ENCODE measurements at regions of chr5 and their contacts with region 1.

Region 1: DNA sequence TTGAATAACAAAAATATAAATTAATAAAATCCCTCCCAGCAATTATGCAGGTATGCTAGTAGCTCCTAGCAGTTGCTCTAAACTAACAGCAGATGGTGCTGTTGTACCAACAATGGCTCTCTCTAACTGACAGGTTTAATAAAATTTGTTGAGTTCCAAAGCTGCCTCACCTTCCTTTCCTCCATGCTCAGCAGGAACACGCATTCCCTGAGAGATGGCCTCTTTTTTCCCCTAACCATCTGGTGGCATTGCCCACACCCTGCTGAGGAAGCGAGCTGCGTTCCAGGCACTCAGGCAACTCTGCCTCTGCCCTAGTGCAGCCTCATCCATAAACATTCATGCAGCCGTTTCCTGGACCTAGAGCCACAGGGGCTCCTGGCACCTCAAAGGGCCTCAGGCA is 106.2 kb downstream of the KLHL3 start:
- DNase-seq: peak; percentile 8
- ATAC-seq: peak; percentile 92
- H3K4me3 ChIP-seq: no peak overlapping the region
- H3K27ac ChIP-seq: no peak overlapping the region
- H3K4me1 ChIP-seq: no peaks in the 10 kb centered on the region
- H3K27me3 ChIP-seq: no peaks in the 10 kb centered on the region
- CTCF ChIP-seq: peak; percentile 75 to 89 (median 86)
- EP300 ChIP-seq: no peak
- POLR2A ChIP-seq: no peak
- RAD21 ChIP-seq: peak; percentile 90

Region 2: GRCh38 chr5:137641148-137641547 is 11.5 kb after region 1 on chr5:
- CTCF ChIA-PET with region 1: interaction called, 23 read pairs
- POLR2A ChIA-PET with region 1: no interaction called
- RAD21 ChIA-PET with region 1: interaction called, 6 read pairs
- SMC1A ChIA-PET with region 1: interaction called, 19 read pairs
- in situ Hi-C with region 1: no loop called
- intact Hi-C with region 1: no loop called
- DNase-seq: no peak
- ATAC-seq: no peak
- H3K4me3 ChIP-seq: no peak overlapping the region
- H3K27ac ChIP-seq: no peak overlapping the region
- H3K4me1 ChIP-seq: no peaks in the 10 kb centered on the region
- H3K27me3 ChIP-seq: no peaks in the 10 kb centered on the region
- CTCF ChIP-seq: no peak
- EP300 ChIP-seq: no peak
- POLR2A ChIP-seq: no peak
- RAD21 ChIP-seq: no peak

Region 3: DNA sequence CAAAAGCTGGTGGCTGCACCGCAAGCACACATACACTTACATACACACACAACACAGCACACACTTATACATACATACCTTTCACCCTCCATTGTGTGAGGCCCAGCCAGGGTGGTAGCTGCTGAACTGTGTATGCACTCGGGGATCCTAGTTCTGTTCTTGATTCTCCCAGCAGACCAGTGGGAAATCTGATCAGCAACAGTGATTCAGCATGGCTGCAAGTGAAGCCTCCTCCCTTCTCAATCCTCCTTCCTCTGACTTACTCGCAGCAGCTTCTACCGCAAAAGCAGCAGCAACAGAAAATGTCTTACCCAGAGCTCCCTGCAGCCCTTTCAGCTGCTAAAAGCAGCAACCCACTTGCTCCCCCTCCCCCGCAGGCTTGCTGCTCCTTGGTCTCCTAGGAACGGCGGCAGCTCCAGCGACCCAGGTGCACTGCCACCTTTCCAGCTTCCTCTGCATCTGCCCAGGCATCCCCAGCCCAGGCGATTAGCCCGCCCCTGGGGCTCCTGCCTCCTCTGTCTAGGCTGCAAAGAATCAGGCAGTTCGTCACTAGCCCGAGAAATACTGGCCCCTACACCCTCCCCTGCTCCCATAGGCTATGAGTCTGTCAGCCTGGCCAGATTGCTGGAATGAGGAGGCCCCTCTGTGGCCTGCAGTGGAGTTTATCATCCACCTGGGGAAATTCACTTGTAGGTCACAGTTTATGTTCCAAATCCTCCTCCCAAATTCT is 106.1 kb after region 1 on chr5 and contains the start of gene KLHL3:
- CTCF ChIA-PET with region 1: interaction called, 195 read pairs
- POLR2A ChIA-PET with region 1: no interaction called
- RAD21 ChIA-PET with region 1: interaction called, 101 read pairs
- SMC1A ChIA-PET with region 1: interaction called, 106 read pairs
- in situ Hi-C with region 1: loop called (anchors 5 kb)
- intact Hi-C with region 1: no loop called
- DNase-seq: no peak
- ATAC-seq: peak; percentile 74
- H3K4me3 ChIP-seq: peak within 1 kb of the TSS; percentile 61
- H3K27ac ChIP-seq: peak within 1 kb of the TSS; percentile 86
- H3K4me1 ChIP-seq: peaks cover 15% of the 10 kb centered on the region
- H3K27me3 ChIP-seq: no peaks in the 10 kb centered on the region
- CTCF ChIP-seq: peak; percentile 7 to 44 (median 17); a peak in 3 of 6 replicates
- EP300 ChIP-seq: no peak
- POLR2A ChIP-seq: peak; percentile 52
- RAD21 ChIP-seq: peak; percentile 69
- polyA plus RNA-seq, gene KLHL3: 1.7 to 2.3 TPM

Region 4: GRCh38 chr5:137754126-137754960 is 124.7 kb after region 1 on chr5 and contains the start of gene HNRNPA0:
- CTCF ChIA-PET with region 1: interaction called, 14 read pairs
- POLR2A ChIA-PET with region 1: no interaction called
- RAD21 ChIA-PET with region 1: no interaction called
- SMC1A ChIA-PET with region 1: interaction called, 4 read pairs
- in situ Hi-C with region 1: no loop called
- intact Hi-C with region 1: no loop called
- DNase-seq: peak; percentile 88
- ATAC-seq: peak; percentile 88
- H3K4me3 ChIP-seq: peak within 1 kb of the TSS; percentile 91
- H3K27ac ChIP-seq: peak within 1 kb of the TSS; percentile 96
- H3K4me1 ChIP-seq: peaks cover 28% of the 10 kb centered on the region
- H3K27me3 ChIP-seq: no peaks in the 10 kb centered on the region
- CTCF ChIP-seq: no peak
- EP300 ChIP-seq: peak in 1 of 2 experiments; percentile 100; a peak in 2 of 4 replicates
- POLR2A ChIP-seq: peak; percentile 86
- RAD21 ChIP-seq: no peak
- polyA plus RNA-seq, gene HNRNPA0: 7.3 to 8.2 TPM

Region 5: DNA sequence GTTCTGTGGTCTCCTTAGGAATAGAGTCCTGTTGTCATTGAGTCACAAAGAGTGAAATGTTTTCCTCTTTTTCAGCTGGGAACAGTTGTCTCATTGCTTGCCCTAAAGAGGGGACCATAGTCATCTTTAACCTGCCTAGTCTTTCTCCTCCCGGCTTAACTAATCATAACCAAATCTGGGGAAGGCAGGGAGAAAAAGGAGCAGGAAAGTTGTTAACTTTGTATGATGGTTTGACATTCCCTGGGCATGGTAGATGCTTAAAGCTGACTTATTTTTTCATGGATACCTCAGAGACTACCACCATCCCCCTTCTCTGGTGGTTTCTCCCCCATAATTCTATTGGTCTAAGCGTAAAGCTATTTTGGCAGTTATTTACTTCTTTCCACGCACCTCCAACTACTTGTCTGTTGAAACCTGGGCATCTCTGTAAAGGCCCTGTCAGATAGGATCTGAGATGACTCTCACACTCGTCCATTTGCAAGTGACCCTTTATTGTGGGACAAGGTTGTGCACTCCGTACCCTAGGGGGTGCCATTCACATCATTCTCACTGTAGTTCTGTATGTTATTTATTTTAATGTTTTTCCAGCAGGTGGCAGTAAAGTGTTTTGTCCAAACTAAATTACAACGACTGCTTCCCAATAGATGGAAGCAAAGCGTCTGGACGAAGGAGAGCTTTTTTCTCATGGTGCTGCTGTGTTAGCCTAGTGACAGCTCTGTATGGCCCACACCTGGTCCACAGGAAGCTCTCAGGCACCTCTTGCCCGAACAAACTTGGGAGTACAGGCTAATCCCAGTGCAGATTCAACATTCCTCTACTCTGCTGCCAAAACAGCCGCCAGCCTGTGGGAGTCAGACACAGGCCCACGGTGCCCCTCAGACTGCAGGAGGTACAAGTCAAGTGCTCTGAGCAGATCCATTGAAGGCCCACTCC is 406.2 kb after region 1 on chr5:
- CTCF ChIA-PET with region 1: interaction called, 3 read pairs
- POLR2A ChIA-PET with region 1: no interaction called
- RAD21 ChIA-PET with region 1: no interaction called
- SMC1A ChIA-PET with region 1: no interaction called
- in situ Hi-C with region 1: no loop called
- intact Hi-C with region 1: loop called (anchors 10 kb)
- DNase-seq: peak; percentile 63
- ATAC-seq: peak; percentile 56
- H3K4me3 ChIP-seq: no peak overlapping the region
- H3K27ac ChIP-seq: no peak overlapping the region
- H3K4me1 ChIP-seq: peaks cover 22% of the 10 kb centered on the region
- H3K27me3 ChIP-seq: no peaks in the 10 kb centered on the region
- CTCF ChIP-seq: peak; percentile 74 to 99 (median 96)
- EP300 ChIP-seq: no peak
- POLR2A ChIP-seq: no peak
- RAD21 ChIP-seq: peak; percentile 69

Region 6: GRCh38 chr5:138128334-138128733 is 498.7 kb after region 1 on chr5:
- CTCF ChIA-PET with region 1: interaction called, 12 read pairs
- POLR2A ChIA-PET with region 1: no interaction called
- RAD21 ChIA-PET with region 1: no interaction called
- SMC1A ChIA-PET with region 1: interaction called, 3 read pairs
- in situ Hi-C with region 1: no loop called
- intact Hi-C with region 1: loop called (anchors 10 kb)
- DNase-seq: no peak
- ATAC-seq: no peak
- H3K4me3 ChIP-seq: no peak overlapping the region
- H3K27ac ChIP-seq: no peak overlapping the region
- H3K4me1 ChIP-seq: no peaks in the 10 kb centered on the region
- H3K27me3 ChIP-seq: no peaks in the 10 kb centered on the region
- CTCF ChIP-seq: no peak
- EP300 ChIP-seq: no peak
- POLR2A ChIP-seq: no peak
- RAD21 ChIP-seq: no peak

Region 7: DNA sequence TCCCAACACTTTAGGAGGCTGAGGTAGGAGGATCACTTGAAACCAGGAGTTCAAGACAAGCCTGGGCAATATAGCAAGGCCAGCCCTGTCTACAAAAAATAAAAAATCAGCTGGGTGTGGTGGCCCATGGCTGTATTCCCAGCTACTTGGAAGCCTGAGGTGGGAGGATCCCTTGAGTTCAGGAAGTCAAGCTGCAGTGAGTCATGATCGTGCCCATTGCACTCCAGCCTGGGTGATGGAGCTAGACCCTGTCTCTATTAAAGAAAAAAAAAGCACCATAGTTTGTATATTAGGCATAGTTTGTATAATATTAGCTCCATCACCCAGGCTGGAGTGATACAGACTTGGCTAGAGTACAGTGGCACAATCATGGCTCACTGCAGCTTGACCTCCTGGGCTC is 519.2 kb after region 1 on chr5:
- CTCF ChIA-PET with region 1: no interaction called
- POLR2A ChIA-PET with region 1: no interaction called
- RAD21 ChIA-PET with region 1: no interaction called
- SMC1A ChIA-PET with region 1: no interaction called
- in situ Hi-C with region 1: no loop called
- intact Hi-C with region 1: no loop called
- DNase-seq: no peak
- ATAC-seq: no peak
- H3K4me3 ChIP-seq: no peak overlapping the region
- H3K27ac ChIP-seq: no peak overlapping the region
- H3K4me1 ChIP-seq: no peaks in the 10 kb centered on the region
- H3K27me3 ChIP-seq: no peaks in the 10 kb centered on the region
- CTCF ChIP-seq: no peak
- EP300 ChIP-seq: no peak
- POLR2A ChIP-seq: no peak
- RAD21 ChIP-seq: no peak

Measured in GM12878 (cell line).